ENCODE measurements at regions of chr1 and their contacts with region 1.

Region 1: GRCh38 chr1:160830321-160831153 is 32.1 kb downstream of the CD244 start:
- DNase-seq: peak; percentile 92
- H3K4me3 ChIP-seq: no peak overlapping the region
- H3K27ac ChIP-seq: peak overlapping the region in 1 of 8 donors; percentile 21
- H3K4me1 ChIP-seq: peaks cover 0 to 12% (median 0%) of the 10 kb centered on the region in 6 donors
- H3K27me3 ChIP-seq: no peaks in the 10 kb centered on the region
- CTCF ChIP-seq: peak; percentile 25 to 76 (median 69)
- POLR2A ChIP-seq: no peak

Region 2: DNA sequence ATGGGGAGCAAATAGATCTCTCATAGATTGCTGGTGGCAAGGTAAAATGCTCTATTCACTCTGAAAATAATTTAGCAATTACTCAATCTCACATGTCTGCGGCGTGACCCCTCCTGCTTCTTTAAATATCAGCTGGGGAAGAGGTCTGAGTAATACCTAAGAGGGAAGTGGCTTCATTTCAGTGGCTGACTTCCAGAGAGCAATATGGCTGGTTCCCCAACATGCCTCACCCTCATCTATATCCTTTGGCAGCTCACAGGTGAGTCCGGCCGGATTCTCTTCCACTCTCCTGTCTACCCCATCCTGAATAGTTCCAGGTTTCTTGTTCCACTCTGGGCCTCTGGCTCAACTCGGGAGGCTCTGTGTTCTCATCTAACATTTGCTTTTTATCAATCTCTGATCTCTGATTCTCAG is 91.4 kb before region 1 on chr1 and contains the start of gene SLAMF7:
- intact Hi-C with region 1: no loop called
- DNase-seq: no peak
- H3K4me3 ChIP-seq: peak within 1 kb of the TSS in 7 of 8 donors; percentile 20 to 64 (median 32)
- H3K27ac ChIP-seq: peak within 1 kb of the TSS in 7 of 8 donors; percentile 53 to 84 (median 71)
- H3K4me1 ChIP-seq: peaks cover 0 to 65% (median 33%) of the 10 kb centered on the region in 6 donors
- H3K27me3 ChIP-seq: no peaks in the 10 kb centered on the region
- CTCF ChIP-seq: no peak
- POLR2A ChIP-seq: no peak
- total RNA-seq, gene SLAMF7: 28.9 to 134 (median 63.5) TPM

Region 3: DNA sequence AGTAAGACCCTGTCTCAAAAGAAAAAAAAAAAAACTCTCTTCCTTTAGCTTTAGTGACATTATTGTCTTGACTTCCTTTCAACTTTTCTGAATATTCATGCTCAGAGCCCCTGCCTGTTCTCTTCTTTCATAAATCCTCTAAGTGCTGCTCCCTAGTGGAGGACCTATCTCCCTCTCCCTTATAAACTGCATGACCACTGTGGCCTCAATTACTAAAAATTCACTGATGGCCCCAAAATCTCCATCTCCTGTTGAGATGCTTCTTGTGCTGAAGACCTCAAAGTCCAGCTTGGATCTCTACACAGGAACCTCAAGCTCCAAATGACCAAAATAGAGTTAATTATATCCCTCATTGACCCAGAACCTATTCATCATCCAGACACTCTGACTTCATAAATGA is 46.7 kb after region 1 on chr1:
- intact Hi-C with region 1: no loop called
- DNase-seq: no peak
- H3K4me3 ChIP-seq: no peak overlapping the region
- H3K27ac ChIP-seq: no peak overlapping the region
- H3K4me1 ChIP-seq: peaks cover 0 to 34% (median 3%) of the 10 kb centered on the region in 6 donors
- H3K27me3 ChIP-seq: no peaks in the 10 kb centered on the region
- CTCF ChIP-seq: peak in 9 of 11 experiments; percentile 13 to 47 (median 34)
- POLR2A ChIP-seq: no peak

Region 4: GRCh38 chr1:160951443-160952128 is 121.0 kb after region 1 on chr1:
- intact Hi-C with region 1: loop called (anchors 5 kb)
- DNase-seq: peak; percentile 87
- H3K4me3 ChIP-seq: no peak overlapping the region
- H3K27ac ChIP-seq: no peak overlapping the region
- H3K4me1 ChIP-seq: peaks cover 0 to 24% (median 14%) of the 10 kb centered on the region in 6 donors
- H3K27me3 ChIP-seq: peaks cover 0 to 6% (median 0%) of the 10 kb centered on the region in 7 donors
- CTCF ChIP-seq: peak; percentile 49 to 90 (median 76)
- POLR2A ChIP-seq: no peak

Region 5: GRCh38 chr1:160963521-160963920 is 133.0 kb after region 1 on chr1:
- intact Hi-C with region 1: no loop called
- DNase-seq: no peak
- H3K4me3 ChIP-seq: no peak overlapping the region
- H3K27ac ChIP-seq: no peak overlapping the region
- H3K4me1 ChIP-seq: no peaks in the 10 kb centered on the region
- H3K27me3 ChIP-seq: no peaks in the 10 kb centered on the region
- CTCF ChIP-seq: no peak
- POLR2A ChIP-seq: no peak